ENCODE measurements at regions of chr1 and their contacts with region 1.

Region 1: GRCh38 chr1:85307987-85308832 is 31.8 kb upstream of the BCL10 start:
- DNase-seq: peak; percentile 38 to 94
- H3K4me3 ChIP-seq: no peak overlapping the region
- H3K27ac ChIP-seq: no peak overlapping the region
- H3K4me1 ChIP-seq: peaks cover 0 to 6% of the 10 kb centered on the region in 2 donors
- H3K27me3 ChIP-seq: no peaks in the 10 kb centered on the region
- CTCF ChIP-seq: peak; percentile 98 to 100 (median 98)

Region 2: GRCh38 chr1:85464497-85465098 is 156.4 kb after region 1 on chr1:
- intact Hi-C with region 1: loop called (anchors 1 kb)
- DNase-seq: peak; percentile 10 to 86
- H3K4me3 ChIP-seq: peak overlapping the region; percentile 86 to 90
- H3K27ac ChIP-seq: peak overlapping the region; percentile 86
- H3K4me1 ChIP-seq: peaks cover 0 to 4% of the 10 kb centered on the region in 2 donors
- H3K27me3 ChIP-seq: no peaks in the 10 kb centered on the region
- CTCF ChIP-seq: no peak

Region 3: DNA sequence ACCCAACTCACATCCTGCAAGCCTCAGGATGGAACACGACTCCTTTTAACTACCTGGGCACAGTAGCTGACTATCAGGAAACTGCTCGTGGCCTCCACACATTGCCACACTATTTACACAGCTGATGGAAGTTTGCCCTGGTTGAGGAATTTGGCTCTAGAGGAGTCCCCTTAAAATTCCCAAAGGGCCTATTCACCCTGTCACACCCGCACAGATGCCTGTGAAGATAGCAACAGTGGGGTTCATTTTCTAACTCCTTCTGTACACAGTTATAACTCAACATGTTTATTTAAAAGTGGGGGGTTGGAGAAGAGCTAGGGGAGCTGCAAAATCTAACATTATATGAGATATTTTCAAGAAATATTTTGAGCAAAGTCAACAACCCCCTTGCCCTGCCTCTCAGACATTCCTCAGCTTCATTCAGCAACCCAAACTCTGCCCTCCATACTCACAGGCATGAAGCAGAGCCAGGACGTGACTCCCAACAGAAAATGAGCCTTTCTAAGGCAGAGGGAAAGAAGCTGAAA is 236.5 kb after region 1 on chr1:
- intact Hi-C with region 1: no loop called
- DNase-seq: no peak
- H3K4me3 ChIP-seq: no peak overlapping the region
- H3K27ac ChIP-seq: peak overlapping the region; percentile 49 to 69
- H3K4me1 ChIP-seq: peaks cover 0 to 25% of the 10 kb centered on the region in 2 donors
- H3K27me3 ChIP-seq: no peaks in the 10 kb centered on the region
- CTCF ChIP-seq: no peak

Region 4: GRCh38 chr1:85576642-85577418 is 268.6 kb after region 1 on chr1:
- intact Hi-C with region 1: loop called (anchors 2 kb)
- DNase-seq: peak; percentile 57 to 96
- H3K4me3 ChIP-seq: peak overlapping the region; percentile 62 to 88
- H3K27ac ChIP-seq: peak overlapping the region; percentile 92 to 96
- H3K4me1 ChIP-seq: peaks cover 5 to 23% of the 10 kb centered on the region in 2 donors
- H3K27me3 ChIP-seq: no peaks in the 10 kb centered on the region
- CTCF ChIP-seq: peak; percentile 59 to 93 (median 67)

Region 5: DNA sequence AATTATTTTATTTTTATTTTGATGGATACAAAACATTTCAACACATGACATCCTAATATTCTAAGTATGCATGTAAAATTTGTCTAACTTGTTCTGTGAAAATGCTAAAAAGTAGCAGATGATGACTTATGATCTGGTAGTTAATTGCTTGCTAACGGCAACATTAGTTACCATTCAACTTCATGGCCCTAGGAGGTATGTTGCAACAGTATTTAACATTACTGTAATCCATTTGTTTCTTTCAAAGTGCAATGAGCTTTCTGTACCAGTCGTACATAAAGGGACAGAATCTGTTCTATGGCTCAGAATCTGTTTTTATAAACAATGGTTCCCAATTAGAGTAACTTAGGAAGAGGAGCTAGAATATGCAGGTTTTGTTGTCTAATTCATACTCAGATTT is 491.5 kb after region 1 on chr1:
- intact Hi-C with region 1: loop called (anchors 10 kb)
- DNase-seq: no peak
- H3K4me3 ChIP-seq: no peak overlapping the region
- H3K27ac ChIP-seq: peak overlapping the region; percentile 23 to 66
- H3K4me1 ChIP-seq: peaks cover 0 to 4% of the 10 kb centered on the region in 2 donors
- H3K27me3 ChIP-seq: no peaks in the 10 kb centered on the region
- CTCF ChIP-seq: no peak